Activated CD8-positive, alpha-beta T cell treated with anti-CD3 and anti-CD28 coated beads, Interleukin-2, amount 10 ng/mL, durations not matched to agents 7 days and 5 days (primary cell): ENCODE measurements at regions of chr6 and their contacts with region 1.

Region 1: DNA sequence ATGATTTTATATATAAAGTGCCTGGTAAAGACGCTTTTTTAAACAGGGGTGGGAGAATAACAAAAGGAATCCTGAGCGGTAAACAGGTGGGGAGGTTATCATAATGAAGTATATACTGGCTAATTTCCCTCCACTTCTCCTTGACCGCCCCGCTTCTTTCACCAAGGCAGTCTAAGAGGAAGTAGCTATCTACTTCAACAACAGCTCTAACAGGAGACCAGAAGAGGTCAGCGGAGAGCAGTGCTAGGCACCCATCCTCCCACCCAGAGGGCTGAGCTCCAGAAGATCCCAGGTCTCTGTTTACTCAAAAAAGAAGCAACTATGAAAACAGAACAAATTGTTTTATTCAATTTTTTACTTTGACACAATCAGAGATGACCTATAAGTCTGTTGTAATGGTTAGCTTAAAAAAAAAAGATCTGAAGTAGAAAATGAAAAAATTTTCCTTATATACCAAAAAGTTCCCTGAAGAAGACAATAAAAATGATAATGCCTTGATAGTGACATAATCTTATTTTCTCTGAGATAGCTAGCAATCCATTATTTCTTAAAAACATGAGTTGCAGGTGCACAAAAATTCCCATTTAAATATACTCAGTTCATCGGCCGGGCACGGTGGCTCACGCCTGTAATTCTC is 141.1 kb downstream of the PDSS2 start:
- DNase-seq: peak; percentile 57
- ATAC-seq: peak; percentile 64
- H3K4me3 Mint-ChIP-seq: no peak overlapping the region
- H3K27ac Mint-ChIP-seq: no peak overlapping the region
- H3K4me1 Mint-ChIP-seq: peaks cover 5% of the 10 kb centered on the region
- H3K27me3 Mint-ChIP-seq: no peaks in the 10 kb centered on the region

Region 2: GRCh38 chr6:107396211-107396610 is 78.0 kb after region 1 on chr6:
- CTCF ChIA-PET with region 1: no interaction called
- POLR2A ChIA-PET with region 1: no interaction called
- DNase-seq: no peak
- ATAC-seq: no peak
- H3K4me3 Mint-ChIP-seq: no peak overlapping the region
- H3K27ac Mint-ChIP-seq: no peak overlapping the region
- H3K4me1 Mint-ChIP-seq: no peaks in the 10 kb centered on the region
- H3K27me3 Mint-ChIP-seq: no peaks in the 10 kb centered on the region

Region 3: DNA sequence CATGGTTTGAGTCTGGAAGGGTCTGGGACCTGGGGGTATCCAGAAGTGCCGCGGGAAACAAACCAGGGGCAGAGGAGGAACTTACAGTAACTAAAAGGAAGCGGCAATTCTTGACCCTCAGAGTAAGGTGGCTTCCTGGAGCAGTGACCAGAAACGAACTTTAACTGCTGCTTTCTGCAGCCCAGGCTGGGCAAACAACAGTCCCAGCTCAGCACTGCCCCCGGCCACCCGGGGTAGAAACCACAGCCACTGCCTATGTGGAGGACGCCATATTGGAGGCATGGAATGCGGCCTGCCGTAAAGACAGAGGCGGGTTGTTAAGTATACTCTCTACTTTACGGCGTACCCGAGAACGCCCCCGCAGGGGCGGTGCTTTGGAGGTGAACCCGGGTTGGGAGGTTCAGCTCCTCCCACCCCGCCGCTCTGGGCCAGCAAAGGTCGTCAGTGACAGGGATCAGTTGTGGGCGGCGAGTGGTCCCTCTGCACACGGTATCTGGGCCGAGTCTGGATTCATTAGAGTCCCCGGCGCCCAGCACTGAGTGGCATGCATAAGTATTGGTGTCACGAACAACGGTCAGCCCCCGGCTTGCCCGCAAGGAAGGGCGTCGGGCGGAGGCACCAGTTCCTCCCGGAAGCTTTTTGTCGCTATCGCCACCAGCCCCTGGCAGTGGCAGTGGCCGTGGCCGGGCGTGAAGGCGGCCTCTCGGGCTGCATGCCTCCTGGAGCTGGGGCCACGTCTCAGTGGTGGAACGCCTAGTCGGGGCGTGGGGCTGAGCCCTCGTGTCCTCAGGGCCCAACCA is 141.3 kb after region 1 on chr6 and contains the start of gene PDSS2:
- CTCF ChIA-PET with region 1: interaction called, 30 read pairs
- POLR2A ChIA-PET with region 1: interaction called, 4 read pairs
- DNase-seq: peak; percentile 99
- ATAC-seq: peak; percentile 96
- H3K4me3 Mint-ChIP-seq: peak within 1 kb of the TSS; percentile 95
- H3K27ac Mint-ChIP-seq: peak within 1 kb of the TSS; percentile 95
- H3K4me1 Mint-ChIP-seq: peaks cover 20% of the 10 kb centered on the region
- H3K27me3 Mint-ChIP-seq: peaks cover 2% of the 10 kb centered on the region
- total RNA-seq, gene PDSS2: 14.2 to 14.6 TPM

Region 4: GRCh38 chr6:107657755-107658461 is 339.7 kb after region 1 on chr6:
- CTCF ChIA-PET with region 1: interaction called, 10 read pairs
- POLR2A ChIA-PET with region 1: no interaction called
- DNase-seq: peak; percentile 87
- ATAC-seq: peak; percentile 91
- H3K4me3 Mint-ChIP-seq: peak overlapping the region; percentile 78
- H3K27ac Mint-ChIP-seq: peak overlapping the region; percentile 98
- H3K4me1 Mint-ChIP-seq: peaks cover 73% of the 10 kb centered on the region
- H3K27me3 Mint-ChIP-seq: no peaks in the 10 kb centered on the region

Region 5: GRCh38 chr6:107704347-107705013 is 386.3 kb after region 1 on chr6:
- CTCF ChIA-PET with region 1: interaction called, 11 read pairs
- POLR2A ChIA-PET with region 1: no interaction called
- DNase-seq: peak; percentile 56
- ATAC-seq: no peak
- H3K4me3 Mint-ChIP-seq: no peak overlapping the region
- H3K27ac Mint-ChIP-seq: no peak overlapping the region
- H3K4me1 Mint-ChIP-seq: peaks cover 19% of the 10 kb centered on the region
- H3K27me3 Mint-ChIP-seq: no peaks in the 10 kb centered on the region

Region 6: GRCh38 chr6:107731422-107732319 is 413.5 kb after region 1 on chr6:
- CTCF ChIA-PET with region 1: no interaction called
- POLR2A ChIA-PET with region 1: no interaction called
- DNase-seq: peak; percentile 56
- ATAC-seq: peak; percentile 37
- H3K4me3 Mint-ChIP-seq: peak overlapping the region; percentile 90
- H3K27ac Mint-ChIP-seq: peak overlapping the region; percentile 92
- H3K4me1 Mint-ChIP-seq: peaks cover 83% of the 10 kb centered on the region
- H3K27me3 Mint-ChIP-seq: no peaks in the 10 kb centered on the region